A549 (cell line): ENCODE measurements at regions of chr1 and their contacts with region 1.

Region 1: GRCh38 chr1:154335025-154335714 is 9.8 kb downstream of the ATP8B2 start:
- DNase-seq: peak; percentile 83 to 88
- ATAC-seq: peak; percentile 80 to 96; a peak in 5 of 6 replicates
- H3K4me3 ChIP-seq: no peak overlapping the region
- H3K27ac ChIP-seq: peak overlapping the region; percentile 38 to 45; a peak in 5 of 6 replicates
- H3K4me1 ChIP-seq: peaks cover 14% of the 10 kb centered on the region
- CTCF ChIP-seq: peak; percentile 93
- EP300 ChIP-seq: no peak
- POLR2A ChIP-seq: no peak
- RAD21 ChIP-seq: peak; percentile 67 to 72

Region 2: GRCh38 chr1:154272217-154272998 is 62.8 kb before region 1 on chr1 and contains the start of gene HAX1:
- CTCF ChIA-PET with region 1: interaction called, 18 read pairs
- POLR2A ChIA-PET with region 1: no interaction called
- DNase-seq: peak; percentile 93 to 96
- ATAC-seq: peak; percentile 93 to 95
- H3K4me3 ChIP-seq: peak within 1 kb of the TSS; percentile 89
- H3K27ac ChIP-seq: peak within 1 kb of the TSS; percentile 92 to 94
- H3K4me1 ChIP-seq: peaks cover 15% of the 10 kb centered on the region
- CTCF ChIP-seq: peak; percentile 92
- EP300 ChIP-seq: no peak
- POLR2A ChIP-seq: peak; percentile 61
- RAD21 ChIP-seq: peak; percentile 88 to 92
- polyA plus RNA-seq, gene HAX1: 123 and 130 TPM in 2 replicates

Region 3: GRCh38 chr1:154324669-154325582 is 10.2 kb before region 1 on chr1 and contains the start of gene ATP8B2:
- CTCF ChIA-PET with region 1: interaction called, 268 read pairs
- POLR2A ChIA-PET with region 1: interaction called, 11 read pairs
- DNase-seq: peak; percentile 83 to 96
- ATAC-seq: peak; percentile 68 to 84
- H3K4me3 ChIP-seq: peak within 1 kb of the TSS; percentile 94
- H3K27ac ChIP-seq: peak within 1 kb of the TSS; percentile 91 to 95
- H3K4me1 ChIP-seq: peaks cover 12% of the 10 kb centered on the region
- CTCF ChIP-seq: peak; percentile 91
- EP300 ChIP-seq: no peak
- POLR2A ChIP-seq: peak; percentile 26
- RAD21 ChIP-seq: peak; percentile 44 to 55
- polyA plus RNA-seq, gene ATP8B2: 12.7 and 17.2 TPM in 2 replicates

Region 4: GRCh38 chr1:154352581-154353459 is 17.6 kb after region 1 on chr1:
- CTCF ChIA-PET with region 1: interaction called, 268 read pairs
- POLR2A ChIA-PET with region 1: no interaction called
- DNase-seq: no peak
- ATAC-seq: peak in 1 of 2 experiments; percentile 13; a peak in 3 of 6 replicates
- H3K4me3 ChIP-seq: no peak overlapping the region
- H3K27ac ChIP-seq: no peak overlapping the region
- H3K4me1 ChIP-seq: peaks cover 5% of the 10 kb centered on the region; the same call in 1 of the 3 replicates
- CTCF ChIP-seq: no peak
- EP300 ChIP-seq: no peak
- POLR2A ChIP-seq: no peak
- RAD21 ChIP-seq: no peak

Region 5: GRCh38 chr1:154404984-154405761 is 70.0 kb after region 1 on chr1 and contains the start of gene IL6R:
- CTCF ChIA-PET with region 1: interaction called, 14 read pairs
- POLR2A ChIA-PET with region 1: no interaction called
- DNase-seq: peak; percentile 74 to 88
- ATAC-seq: peak; percentile 87 to 88
- H3K4me3 ChIP-seq: peak within 1 kb of the TSS; percentile 78
- H3K27ac ChIP-seq: peak within 1 kb of the TSS; percentile 92 to 95
- H3K4me1 ChIP-seq: peaks cover 31% of the 10 kb centered on the region
- CTCF ChIP-seq: peak; percentile 47
- EP300 ChIP-seq: no peak
- POLR2A ChIP-seq: peak; percentile 46
- RAD21 ChIP-seq: peak; percentile 56 to 73
- polyA plus RNA-seq, gene IL6R: 2.7 and 3.0 TPM in 2 replicates

Region 6: GRCh38 chr1:154442006-154442740 is 107.0 kb after region 1 on chr1:
- CTCF ChIA-PET with region 1: interaction called, 11 read pairs
- POLR2A ChIA-PET with region 1: no interaction called
- DNase-seq: no peak
- ATAC-seq: peak in 1 of 2 experiments; percentile 78; a peak in 3 of 6 replicates
- H3K4me3 ChIP-seq: no peak overlapping the region
- H3K27ac ChIP-seq: peak overlapping the region; percentile 40 to 55; a peak in 4 of 6 replicates
- H3K4me1 ChIP-seq: peaks cover 33% of the 10 kb centered on the region
- CTCF ChIP-seq: peak; percentile 27
- EP300 ChIP-seq: no peak
- POLR2A ChIP-seq: no peak
- RAD21 ChIP-seq: peak in 1 of 2 experiments; percentile 36; a peak in 3 of 5 replicates

Region 7: GRCh38 chr1:154546264-154547063 is 211.3 kb after region 1 on chr1:
- CTCF ChIA-PET with region 1: interaction called, 20 read pairs
- POLR2A ChIA-PET with region 1: no interaction called
- DNase-seq: peak; percentile 81 to 90
- ATAC-seq: peak; percentile 91 to 95
- H3K4me3 ChIP-seq: no peak overlapping the region
- H3K27ac ChIP-seq: no peak overlapping the region
- H3K4me1 ChIP-seq: peaks cover 21% of the 10 kb centered on the region
- CTCF ChIP-seq: peak; percentile 79
- EP300 ChIP-seq: no peak
- POLR2A ChIP-seq: no peak
- RAD21 ChIP-seq: peak; percentile 85 to 88